Activated CD4-positive, alpha-beta memory T cell treated with anti-CD3 and anti-CD28 coated beads for 36 hours (primary cell): ENCODE measurements at regions of chr4 and their contacts with region 1.

Region 1: DNA sequence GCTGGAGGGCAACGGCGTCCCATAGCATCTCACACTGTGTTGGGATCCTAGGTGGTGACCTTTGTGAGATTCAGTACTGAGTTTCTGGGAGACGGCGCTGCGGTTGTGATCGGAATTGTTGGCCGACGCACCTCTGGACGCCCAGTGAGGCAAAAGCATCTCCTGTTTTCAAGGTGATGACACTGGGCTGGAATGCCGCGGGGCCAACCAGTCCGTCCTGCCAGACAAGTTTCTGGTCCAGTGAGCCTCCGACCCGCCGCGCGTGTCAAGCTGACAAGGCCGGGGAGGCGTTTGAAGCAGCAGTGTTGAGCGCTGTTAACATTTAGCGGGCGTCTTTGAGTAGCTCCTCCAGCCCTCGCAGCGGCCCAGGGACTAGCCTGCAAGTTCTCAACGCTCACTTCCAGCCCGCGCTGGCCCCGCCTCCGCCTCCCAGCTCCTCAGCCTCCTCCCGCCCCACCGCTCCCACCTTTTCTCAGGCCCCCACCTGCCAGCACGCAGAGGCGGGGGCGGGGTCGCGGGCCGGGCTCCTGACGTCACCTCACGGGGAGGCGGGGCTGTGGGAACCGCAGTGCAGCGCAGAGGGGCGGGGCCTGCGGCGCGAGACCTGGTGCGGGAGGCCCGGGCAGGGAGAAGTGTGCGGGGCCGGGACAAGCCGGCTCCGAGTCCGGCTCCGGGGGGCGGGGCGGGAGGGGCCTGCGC is 476 bp upstream of the CDS1 start:
- DNase-seq: peak; percentile 92
- H3K4me3 Mint-ChIP-seq: peak overlapping the region; percentile 75
- H3K27ac Mint-ChIP-seq: no peak overlapping the region
- H3K4me1 Mint-ChIP-seq: peaks cover 17% of the 10 kb centered on the region
- H3K27me3 Mint-ChIP-seq: peaks cover 42% of the 10 kb centered on the region

Region 2: DNA sequence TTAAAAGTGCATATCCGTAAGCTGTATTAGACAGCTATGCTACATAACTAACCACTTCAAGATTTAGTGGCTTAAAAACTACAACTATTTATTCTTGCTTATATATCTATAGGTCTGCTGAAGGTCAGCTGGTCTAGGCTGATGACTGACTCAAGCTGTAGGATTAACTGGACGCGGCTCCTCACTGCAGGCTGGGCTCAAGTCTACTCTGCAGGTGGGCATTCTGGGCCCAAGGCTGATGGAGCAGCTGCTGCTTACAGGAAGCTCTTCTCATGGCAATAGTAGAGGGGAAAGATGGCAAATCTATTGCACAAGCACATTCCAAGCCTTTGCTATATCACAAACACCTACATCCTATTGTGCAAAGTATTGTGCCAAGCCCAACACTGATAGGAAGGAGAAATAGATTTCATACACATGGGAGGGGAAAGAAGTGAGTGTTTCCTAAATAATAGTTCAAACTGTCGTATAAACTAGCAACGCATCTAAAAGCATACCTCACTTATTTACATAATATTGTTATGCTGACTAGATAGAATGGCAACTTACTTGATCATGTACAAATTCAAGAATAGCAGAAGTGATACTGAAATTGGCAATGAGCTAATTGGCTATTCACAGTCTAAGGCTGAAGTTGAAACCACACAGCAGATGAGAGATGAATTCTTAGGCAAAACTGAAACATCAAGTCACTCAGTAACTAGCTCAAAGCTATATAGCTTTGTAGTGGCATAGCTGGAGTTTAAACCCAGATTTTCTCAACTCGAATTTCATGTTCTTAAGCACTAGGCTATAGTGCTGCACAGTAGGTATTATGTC is 347.1 kb before region 1 on chr4:
- CTCF ChIA-PET with region 1: no interaction called
- POLR2A ChIA-PET with region 1: no interaction called
- intact Hi-C with region 1: no loop called
- DNase-seq: no peak
- H3K4me3 Mint-ChIP-seq: no peak overlapping the region
- H3K27ac Mint-ChIP-seq: no peak overlapping the region
- H3K4me1 Mint-ChIP-seq: no peaks in the 10 kb centered on the region
- H3K27me3 Mint-ChIP-seq: no peaks in the 10 kb centered on the region

Region 3: DNA sequence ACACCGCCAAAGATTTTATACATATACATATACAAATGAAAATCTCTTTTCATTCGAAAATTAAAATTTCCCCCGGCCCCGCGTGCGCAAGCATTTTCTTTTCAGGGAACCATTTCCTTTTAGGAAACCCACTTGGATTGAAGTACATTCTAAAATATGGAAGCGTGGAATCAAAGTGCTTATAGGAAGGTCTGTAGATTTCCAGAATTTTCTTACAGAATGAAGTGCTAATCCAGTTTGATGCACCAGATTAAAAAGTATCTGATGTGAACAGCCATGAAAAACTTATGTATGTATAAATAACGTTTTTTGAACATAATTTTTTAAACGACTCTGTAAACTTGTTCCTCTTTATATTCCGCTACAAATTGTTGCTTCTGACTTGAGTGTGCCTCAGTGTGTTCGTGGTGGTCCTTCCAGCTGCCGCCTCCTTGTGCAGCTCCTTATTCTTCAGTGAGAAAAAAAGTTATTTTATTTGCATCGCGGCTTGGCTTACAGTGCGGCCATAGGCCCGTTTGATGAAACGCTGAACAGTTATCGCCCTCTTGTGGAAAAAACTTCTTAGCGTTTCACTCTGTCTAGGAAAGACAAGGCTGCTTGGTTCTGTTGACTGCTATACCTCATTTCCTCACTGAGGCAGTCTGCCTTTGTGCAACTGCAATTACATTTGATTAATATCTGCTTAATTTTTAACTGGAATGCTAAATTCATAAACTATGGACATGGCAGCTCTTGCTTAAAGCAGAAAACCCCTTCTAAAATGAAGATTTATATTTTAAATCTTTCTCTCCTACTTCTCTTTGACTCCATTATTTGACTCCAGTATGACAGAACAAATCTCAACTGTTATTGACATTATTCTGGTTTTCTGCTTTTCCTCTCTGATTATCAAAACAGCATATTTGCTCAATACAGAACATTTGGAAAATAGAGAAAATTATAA is 78.7 kb before region 1 on chr4:
- CTCF ChIA-PET with region 1: no interaction called
- POLR2A ChIA-PET with region 1: interaction called, 3 read pairs
- intact Hi-C with region 1: loop called (anchors 5 kb)
- DNase-seq: no peak
- H3K4me3 Mint-ChIP-seq: no peak overlapping the region
- H3K27ac Mint-ChIP-seq: no peak overlapping the region
- H3K4me1 Mint-ChIP-seq: peaks cover 3% of the 10 kb centered on the region
- H3K27me3 Mint-ChIP-seq: peaks cover 79% of the 10 kb centered on the region

Region 4: GRCh38 chr4:84529169-84529751 is 53.2 kb before region 1 on chr4:
- CTCF ChIA-PET with region 1: no interaction called
- POLR2A ChIA-PET with region 1: no interaction called
- intact Hi-C with region 1: no loop called
- DNase-seq: no peak
- H3K4me3 Mint-ChIP-seq: no peak overlapping the region
- H3K27ac Mint-ChIP-seq: no peak overlapping the region
- H3K4me1 Mint-ChIP-seq: no peaks in the 10 kb centered on the region
- H3K27me3 Mint-ChIP-seq: peaks cover 21% of the 10 kb centered on the region

Region 5: DNA sequence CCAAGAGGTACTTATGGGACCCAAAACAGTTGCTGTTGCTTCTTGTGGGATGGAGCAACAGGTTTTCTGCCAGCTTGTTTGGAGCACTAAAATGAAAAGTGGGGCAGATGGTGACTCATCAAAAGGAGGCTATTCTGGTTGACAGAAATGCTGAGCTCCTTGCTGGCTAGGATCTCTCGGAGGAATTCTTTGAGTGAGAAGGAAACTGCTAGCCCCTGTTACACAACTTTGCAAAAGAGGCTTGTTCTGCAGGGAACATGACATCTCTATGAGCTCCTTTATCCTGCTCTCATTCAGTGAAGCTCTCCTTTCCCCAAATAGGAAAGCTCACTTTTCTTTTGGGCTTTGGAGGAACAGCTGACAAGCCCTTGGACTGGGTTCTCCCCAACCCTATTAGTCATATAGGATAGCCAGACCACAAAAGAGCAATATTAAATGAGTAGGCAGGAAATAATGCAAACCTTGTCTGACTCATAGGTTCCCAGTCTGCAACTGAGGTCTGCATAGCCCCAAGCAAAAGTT is 108.8 kb after region 1 on chr4:
- CTCF ChIA-PET with region 1: no interaction called
- POLR2A ChIA-PET with region 1: no interaction called
- intact Hi-C with region 1: loop called (anchors 5 kb)
- DNase-seq: no peak
- H3K4me3 Mint-ChIP-seq: no peak overlapping the region
- H3K27ac Mint-ChIP-seq: no peak overlapping the region
- H3K4me1 Mint-ChIP-seq: peaks cover 7% of the 10 kb centered on the region
- H3K27me3 Mint-ChIP-seq: no peaks in the 10 kb centered on the region

Region 6: GRCh38 chr4:84750253-84750959 is 168.0 kb after region 1 on chr4:
- CTCF ChIA-PET with region 1: interaction called, 4 read pairs
- POLR2A ChIA-PET with region 1: no interaction called
- intact Hi-C with region 1: loop called (anchors 5 kb)
- DNase-seq: no peak
- H3K4me3 Mint-ChIP-seq: no peak overlapping the region
- H3K27ac Mint-ChIP-seq: no peak overlapping the region
- H3K4me1 Mint-ChIP-seq: no peaks in the 10 kb centered on the region
- H3K27me3 Mint-ChIP-seq: peaks cover 4% of the 10 kb centered on the region

Region 7: GRCh38 chr4:84971319-84971932 is 389.0 kb after region 1 on chr4:
- CTCF ChIA-PET with region 1: interaction called, 14 read pairs
- POLR2A ChIA-PET with region 1: no interaction called
- intact Hi-C with region 1: loop called (anchors 2 kb)
- DNase-seq: no peak
- H3K4me3 Mint-ChIP-seq: no peak overlapping the region
- H3K27ac Mint-ChIP-seq: no peak overlapping the region
- H3K4me1 Mint-ChIP-seq: peaks cover 8% of the 10 kb centered on the region
- H3K27me3 Mint-ChIP-seq: peaks cover 16% of the 10 kb centered on the region